ENCODE measurements at regions of chr19 and their contacts with region 1.

Region 1: GRCh38 chr19:49497047-49497788 is 984 bp downstream of the RPS11 start:
- DNase-seq: no peak
- ATAC-seq: no peak
- H3K4me3 ChIP-seq: peak overlapping the region; percentile 90 to 96
- H3K27ac ChIP-seq: peak overlapping the region; percentile 86
- H3K4me1 ChIP-seq: peaks cover 15 to 61% of the 10 kb centered on the region in 2 experiments
- H3K27me3 ChIP-seq: no peaks in the 10 kb centered on the region
- CTCF ChIP-seq: no peak
- POLR2A ChIP-seq: no peak
- RAD21 ChIP-seq: no peak

Region 2: GRCh38 chr19:49580264-49581006 is 83.2 kb after region 1 on chr19 and contains the start of gene NOSIP:
- CTCF ChIA-PET with region 1: no interaction called
- POLR2A ChIA-PET with region 1: interaction called, 11 read pairs
- RAD21 ChIA-PET with region 1: no interaction called
- intact Hi-C with region 1: no loop called
- DNase-seq: peak; percentile 95
- ATAC-seq: peak; percentile 85
- H3K4me3 ChIP-seq: peak within 1 kb of the TSS; percentile 86 to 99
- H3K27ac ChIP-seq: peak within 1 kb of the TSS; percentile 56
- H3K4me1 ChIP-seq: peaks cover 18 to 50% of the 10 kb centered on the region in 2 experiments
- H3K27me3 ChIP-seq: no peaks in the 10 kb centered on the region
- CTCF ChIP-seq: no peak
- POLR2A ChIP-seq: peak; percentile 97
- RAD21 ChIP-seq: no peak
- total RNA-seq, gene NOSIP: 133 TPM

Region 3: DNA sequence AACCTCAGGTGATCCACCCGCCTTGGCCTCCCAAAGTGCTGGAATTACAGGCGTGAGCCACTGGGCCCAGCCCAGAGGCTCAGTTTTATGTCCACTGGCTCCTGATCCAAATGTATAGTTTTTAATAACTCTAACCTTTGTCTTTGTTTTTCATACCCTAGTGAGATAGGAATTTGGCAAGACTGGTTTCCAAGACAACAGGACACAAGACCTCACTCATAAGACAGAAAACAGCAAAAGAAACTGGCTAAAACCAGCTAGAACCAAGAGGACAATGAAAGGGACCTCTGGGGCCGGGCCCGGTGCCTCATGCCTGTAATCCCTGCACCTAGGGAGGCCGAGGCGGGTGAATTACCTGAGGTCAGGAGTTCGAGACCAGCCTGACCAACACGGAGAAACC is 221.3 kb after region 1 on chr19:
- CTCF ChIA-PET with region 1: no interaction called
- POLR2A ChIA-PET with region 1: no interaction called
- RAD21 ChIA-PET with region 1: no interaction called
- intact Hi-C with region 1: no loop called
- DNase-seq: no peak
- ATAC-seq: no peak
- H3K4me3 ChIP-seq: peak overlapping the region; percentile 62 to 87
- H3K27ac ChIP-seq: peak overlapping the region; percentile 68
- H3K4me1 ChIP-seq: peaks cover 3 to 24% of the 10 kb centered on the region in 2 experiments
- H3K27me3 ChIP-seq: no peaks in the 10 kb centered on the region
- CTCF ChIP-seq: no peak
- POLR2A ChIP-seq: no peak
- RAD21 ChIP-seq: no peak

Region 4: DNA sequence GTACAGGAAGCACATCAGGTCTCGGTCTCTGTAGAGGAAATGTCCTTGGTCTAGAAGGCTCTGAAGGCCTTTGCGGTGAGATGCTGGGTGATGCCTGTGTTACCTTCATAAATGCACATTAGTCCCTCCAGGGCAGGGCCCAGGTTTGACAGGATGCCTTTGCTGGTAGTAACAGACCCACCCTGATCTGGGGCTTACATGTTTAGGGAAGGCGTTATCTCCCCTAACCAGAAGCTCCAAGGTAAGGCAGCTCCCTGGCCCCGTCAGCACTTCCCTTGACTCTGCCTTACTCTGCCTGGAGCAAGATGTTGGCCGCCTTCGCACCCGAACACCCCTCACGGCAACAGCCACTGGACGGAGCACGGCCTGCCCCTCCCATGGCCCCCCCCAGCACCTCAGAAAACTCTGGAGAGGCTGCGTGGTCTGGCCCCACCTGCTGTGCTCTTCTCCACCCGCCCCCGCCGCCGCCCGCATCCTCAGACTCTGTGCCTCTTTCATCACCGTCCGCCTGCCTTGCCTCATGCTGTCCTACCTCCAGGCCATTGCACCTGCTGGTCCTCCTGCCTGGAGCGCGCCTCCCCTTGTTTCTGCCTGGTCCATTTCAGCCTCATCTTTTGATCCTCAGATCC is 278.6 kb after region 1 on chr19:
- CTCF ChIA-PET with region 1: no interaction called
- POLR2A ChIA-PET with region 1: no interaction called
- RAD21 ChIA-PET with region 1: no interaction called
- intact Hi-C with region 1: no loop called
- DNase-seq: no peak
- ATAC-seq: no peak
- H3K4me3 ChIP-seq: no peak overlapping the region
- H3K27ac ChIP-seq: no peak overlapping the region
- H3K4me1 ChIP-seq: no peaks in the 10 kb centered on the region
- H3K27me3 ChIP-seq: no peaks in the 10 kb centered on the region
- CTCF ChIP-seq: no peak
- POLR2A ChIP-seq: no peak
- RAD21 ChIP-seq: no peak